ENCODE measurements at regions of chr16 and their contacts with region 1.

Region 1: GRCh38 chr16:88510091-88510994 is 57.3 kb downstream of the ZFPM1 start:
- DNase-seq: no peak
- H3K4me3 ChIP-seq: peak overlapping the region; percentile 25
- H3K4me3 Mint-ChIP-seq: no peak overlapping the region
- H3K27ac Mint-ChIP-seq: peak overlapping the region; percentile 97
- H3K4me1 ChIP-seq: peaks cover 61% of the 10 kb centered on the region
- H3K4me1 Mint-ChIP-seq: peaks cover 19% of the 10 kb centered on the region
- H3K27me3 ChIP-seq: no peaks in the 10 kb centered on the region
- H3K27me3 Mint-ChIP-seq: no peaks in the 10 kb centered on the region
- CTCF ChIP-seq: no peak

Region 2: GRCh38 chr16:88452482-88453216 is 57.7 kb before region 1 on chr16:
- CTCF ChIA-PET with region 1: interaction called, 8 read pairs
- POLR2A ChIA-PET with region 1: interaction called, 8 read pairs
- intact Hi-C with region 1: loop called (anchors 1 kb)
- DNase-seq: peak; percentile 97 to 100
- H3K4me3 ChIP-seq: peak overlapping the region; percentile 60
- H3K4me3 Mint-ChIP-seq: peak overlapping the region; percentile 97
- H3K27ac Mint-ChIP-seq: peak overlapping the region; percentile 84
- H3K4me1 ChIP-seq: peaks cover 25% of the 10 kb centered on the region
- H3K4me1 Mint-ChIP-seq: peaks cover 6% of the 10 kb centered on the region
- H3K27me3 ChIP-seq: no peaks in the 10 kb centered on the region
- H3K27me3 Mint-ChIP-seq: no peaks in the 10 kb centered on the region
- CTCF ChIP-seq: no peak

Region 3: DNA sequence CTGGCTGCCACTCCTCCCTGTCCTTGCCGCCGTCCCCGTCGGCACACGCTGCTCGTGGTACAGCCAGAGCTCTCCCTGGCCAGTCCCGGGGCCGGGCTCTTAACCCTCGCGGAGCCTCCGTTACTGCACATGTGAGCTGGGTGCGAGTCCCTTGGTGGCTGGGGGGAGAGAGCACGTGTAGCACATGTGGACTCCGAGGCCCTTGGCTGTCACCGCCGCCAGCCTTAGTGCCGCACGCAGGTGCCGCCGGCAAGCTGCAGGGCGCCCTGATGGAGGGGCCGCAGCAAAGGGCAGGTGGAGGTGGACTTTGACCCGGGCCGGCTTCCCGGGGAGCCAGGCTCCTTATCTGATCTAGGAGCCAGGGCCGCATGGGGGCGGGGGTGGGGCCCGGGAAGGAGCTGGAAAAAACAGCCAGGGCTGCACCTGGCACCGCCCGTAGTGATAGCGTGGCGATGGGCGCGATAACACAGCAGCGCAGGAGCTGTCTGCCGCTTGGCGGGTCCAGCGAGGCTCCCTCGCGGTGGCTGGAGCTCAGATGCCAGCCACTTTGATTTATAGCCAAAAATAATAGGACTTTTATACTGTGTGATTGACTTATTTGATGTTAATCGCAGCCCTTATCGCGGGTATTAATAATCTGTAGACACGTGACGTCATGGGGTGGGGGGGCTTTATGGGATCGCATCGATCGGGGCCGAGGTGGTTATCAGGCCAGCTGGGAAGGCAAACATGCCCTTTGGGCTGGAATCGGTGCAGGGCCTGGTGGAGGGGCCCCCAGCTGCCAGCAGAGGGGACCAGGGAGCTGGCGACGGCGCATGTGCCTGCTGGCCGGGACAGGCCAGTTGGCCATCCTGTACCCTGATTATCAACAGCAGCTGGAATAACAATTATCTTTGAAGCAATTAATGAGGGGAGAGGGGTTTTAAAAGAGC is 22.2 kb before region 1 on chr16:
- CTCF ChIA-PET with region 1: interaction called, 76 read pairs
- POLR2A ChIA-PET with region 1: interaction called, 59 read pairs
- intact Hi-C with region 1: loop called (anchors 1 kb)
- DNase-seq: peak; percentile 98 to 99
- H3K4me3 ChIP-seq: peak overlapping the region; percentile 21
- H3K4me3 Mint-ChIP-seq: peak overlapping the region; percentile 84
- H3K27ac Mint-ChIP-seq: peak overlapping the region; percentile 99
- H3K4me1 ChIP-seq: peaks cover 70% of the 10 kb centered on the region
- H3K4me1 Mint-ChIP-seq: peaks cover 32% of the 10 kb centered on the region
- H3K27me3 ChIP-seq: no peaks in the 10 kb centered on the region
- H3K27me3 Mint-ChIP-seq: no peaks in the 10 kb centered on the region
- CTCF ChIP-seq: peak; percentile 34 to 91

Region 4: DNA sequence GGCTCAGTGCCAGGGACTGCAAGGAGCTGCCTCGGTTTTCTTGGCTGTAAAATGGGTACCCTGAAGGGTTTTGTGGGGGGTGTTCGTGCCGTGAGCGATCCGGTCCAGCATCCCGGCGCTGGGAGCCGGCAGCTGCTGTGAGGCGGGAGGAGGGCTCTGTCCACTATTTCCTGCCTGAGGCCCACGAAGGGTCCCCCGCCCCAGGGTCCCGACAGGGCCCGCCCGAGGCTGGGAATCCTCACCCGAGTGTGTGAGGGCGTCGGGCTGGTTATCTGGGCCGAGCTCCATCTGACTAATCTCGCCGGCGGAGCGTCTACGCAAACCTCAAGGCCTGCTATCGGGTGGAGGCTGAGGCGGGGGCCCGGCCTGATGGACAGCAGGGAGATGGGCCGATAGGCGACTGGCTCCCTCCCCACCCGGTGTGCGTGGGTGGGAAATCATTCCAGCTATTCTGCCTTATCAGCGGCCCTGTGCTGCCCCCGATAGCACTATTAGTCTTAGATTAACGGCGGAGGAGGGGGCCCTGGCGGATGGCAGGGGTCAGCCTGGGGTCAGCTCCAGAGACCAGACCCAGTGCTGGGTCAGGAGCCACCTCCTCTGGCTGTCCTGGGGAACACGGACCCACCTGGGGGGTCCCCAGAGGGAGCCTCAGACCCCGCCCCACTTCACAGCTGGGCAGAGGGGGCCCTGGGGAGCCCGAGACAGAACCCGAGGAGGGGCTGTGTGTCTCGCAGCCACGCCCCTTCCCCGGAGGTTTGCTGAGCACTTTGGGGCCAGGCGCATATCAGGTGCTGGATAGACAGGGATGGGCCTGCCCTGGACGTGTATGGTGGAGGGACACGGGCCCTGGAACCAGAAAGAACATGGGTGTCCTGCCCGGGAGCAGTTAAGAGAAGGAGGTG is 12.5 kb before region 1 on chr16:
- CTCF ChIA-PET with region 1: interaction called, 4 read pairs
- POLR2A ChIA-PET with region 1: interaction called, 13 read pairs
- intact Hi-C with region 1: no loop called
- DNase-seq: peak; percentile 82 to 93
- H3K4me3 ChIP-seq: no peak overlapping the region
- H3K4me3 Mint-ChIP-seq: peak overlapping the region; percentile 43
- H3K27ac Mint-ChIP-seq: peak overlapping the region; percentile 85
- H3K4me1 ChIP-seq: peaks cover 57% of the 10 kb centered on the region
- H3K4me1 Mint-ChIP-seq: peaks cover 36% of the 10 kb centered on the region
- H3K27me3 ChIP-seq: no peaks in the 10 kb centered on the region
- H3K27me3 Mint-ChIP-seq: no peaks in the 10 kb centered on the region
- CTCF ChIP-seq: no peak

Region 5: GRCh38 chr16:88527186-88527936 is 17.0 kb after region 1 on chr16:
- CTCF ChIA-PET with region 1: interaction called, 3 read pairs
- POLR2A ChIA-PET with region 1: interaction called, 3 read pairs
- intact Hi-C with region 1: loop called (anchors 2 kb)
- DNase-seq: peak; percentile 50 to 87
- H3K4me3 ChIP-seq: no peak overlapping the region
- H3K4me3 Mint-ChIP-seq: no peak overlapping the region
- H3K27ac Mint-ChIP-seq: no peak overlapping the region
- H3K4me1 ChIP-seq: peaks cover 22% of the 10 kb centered on the region
- H3K4me1 Mint-ChIP-seq: no peaks in the 10 kb centered on the region
- H3K27me3 ChIP-seq: no peaks in the 10 kb centered on the region
- H3K27me3 Mint-ChIP-seq: no peaks in the 10 kb centered on the region
- CTCF ChIP-seq: peak; percentile 92 to 96

Region 6: DNA sequence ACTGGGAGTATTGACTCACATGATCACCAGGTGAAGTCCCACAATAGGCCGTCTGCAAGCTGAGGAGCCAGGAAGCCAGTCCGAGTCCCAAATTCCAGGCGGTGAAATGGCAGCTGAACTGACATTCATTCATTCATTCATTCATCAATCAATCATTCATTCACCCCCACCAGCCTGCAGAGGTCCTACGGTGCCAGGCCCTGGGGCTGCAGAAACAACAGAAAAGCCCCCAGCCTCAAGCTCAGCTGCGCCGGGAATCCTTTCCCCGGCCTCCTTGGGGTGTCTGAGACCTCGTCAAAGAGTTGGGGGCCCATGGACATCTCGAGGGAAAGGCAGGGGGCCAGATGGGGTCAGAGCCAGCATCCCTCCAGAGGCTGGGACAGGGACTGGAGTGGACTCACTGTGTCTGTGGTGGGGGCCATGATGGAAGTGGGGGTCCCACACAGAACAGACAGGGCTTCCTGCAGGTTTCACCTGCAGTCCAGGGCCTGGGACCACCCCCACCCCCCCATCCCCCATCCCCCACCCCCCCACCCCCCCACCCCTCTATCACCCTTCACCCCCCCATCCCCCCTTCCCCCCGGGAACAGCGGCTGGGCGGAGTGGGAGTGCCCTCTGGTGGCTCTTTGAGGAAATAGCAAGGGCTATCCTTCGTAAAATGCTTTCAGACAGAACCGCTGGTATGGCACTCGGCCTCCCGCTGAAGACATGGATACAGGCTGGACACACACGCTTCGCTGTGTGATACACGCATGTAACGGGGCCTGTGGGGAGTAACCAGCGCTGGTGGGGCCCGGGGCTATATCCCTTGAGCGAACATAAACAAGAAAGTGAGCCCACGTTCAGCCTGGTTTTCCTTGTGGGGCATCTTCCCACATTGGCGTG is 51.4 kb after region 1 on chr16:
- CTCF ChIA-PET with region 1: no interaction called
- POLR2A ChIA-PET with region 1: interaction called, 11 read pairs
- intact Hi-C with region 1: no loop called
- DNase-seq: peak in 1 of 2 experiments; percentile 75
- H3K4me3 ChIP-seq: no peak overlapping the region
- H3K4me3 Mint-ChIP-seq: no peak overlapping the region
- H3K27ac Mint-ChIP-seq: no peak overlapping the region
- H3K4me1 ChIP-seq: peaks cover 9% of the 10 kb centered on the region
- H3K4me1 Mint-ChIP-seq: peaks cover 6% of the 10 kb centered on the region
- H3K27me3 ChIP-seq: no peaks in the 10 kb centered on the region
- H3K27me3 Mint-ChIP-seq: peaks cover 2% of the 10 kb centered on the region
- CTCF ChIP-seq: peak; percentile 80 to 88

Region 7: DNA sequence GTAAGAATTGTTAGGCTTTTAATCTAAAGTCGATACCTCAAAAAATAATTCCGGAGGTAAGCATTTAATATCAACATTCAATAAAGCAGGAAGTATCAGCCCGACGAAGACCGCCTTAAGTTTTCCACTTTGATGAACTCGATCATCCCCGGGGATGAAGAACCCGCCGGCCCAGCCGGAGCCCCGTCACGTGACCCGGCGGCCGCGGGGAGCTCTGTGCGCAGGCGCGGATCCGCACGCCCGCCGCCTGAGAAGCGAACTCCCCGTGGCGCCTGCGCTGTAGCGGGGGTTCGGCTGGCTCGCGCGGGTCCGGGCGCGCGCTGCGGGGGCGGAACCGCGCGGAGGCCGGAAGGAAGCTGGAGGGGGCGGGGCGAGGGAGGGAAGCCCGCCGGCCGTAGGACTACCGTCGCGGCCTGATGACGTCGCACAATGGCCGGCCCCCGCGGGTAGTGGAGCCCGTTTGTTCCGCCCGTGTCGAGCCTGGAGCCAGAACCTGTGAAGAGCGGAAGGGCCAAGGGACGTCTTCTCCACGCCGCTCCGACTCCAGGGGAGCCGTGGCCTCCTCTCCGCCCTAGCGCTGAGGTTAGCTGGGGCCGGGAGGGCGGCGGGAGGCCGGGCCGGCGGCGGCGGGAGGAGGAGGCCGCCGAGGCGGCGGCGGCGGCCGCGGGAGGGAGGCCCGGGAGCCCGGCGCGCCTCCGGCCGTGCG is 59.8 kb after region 1 on chr16 and contains the start of gene ZC3H18:
- CTCF ChIA-PET with region 1: interaction called, 7 read pairs
- POLR2A ChIA-PET with region 1: interaction called, 17 read pairs
- intact Hi-C with region 1: no loop called
- DNase-seq: peak; percentile 95 to 98
- H3K4me3 ChIP-seq: peak within 1 kb of the TSS; percentile 96
- H3K4me3 Mint-ChIP-seq: peak within 1 kb of the TSS; percentile 80
- H3K27ac Mint-ChIP-seq: peak within 1 kb of the TSS; percentile 91
- H3K4me1 ChIP-seq: peaks cover 9% of the 10 kb centered on the region
- H3K4me1 Mint-ChIP-seq: no peaks in the 10 kb centered on the region
- H3K27me3 ChIP-seq: no peaks in the 10 kb centered on the region
- H3K27me3 Mint-ChIP-seq: no peaks in the 10 kb centered on the region
- CTCF ChIP-seq: no peak
- total RNA-seq, gene ZC3H18: 82.0 and 91.9 TPM in 2 replicates

Measured in Caco-2 (cell line).